Natural killer cell (primary cell): ENCODE measurements at regions of chr2 and their contacts with region 1.

Region 1: GRCh38 chr2:37600735-37601134 is 70.7 kb downstream of the CDC42EP3 start:
- DNase-seq: peak in 1 of 2 donors; percentile 34
- ATAC-seq: peak in 1 of 3 donors; percentile 11
- H3K4me3 ChIP-seq: peak overlapping the region; percentile 39
- H3K4me3 Mint-ChIP-seq: peak overlapping the region; percentile 97
- H3K27ac ChIP-seq: peak overlapping the region; percentile 93
- H3K27ac Mint-ChIP-seq: peak overlapping the region; percentile 98 to 99
- H3K4me1 ChIP-seq: peaks cover 16% of the 10 kb centered on the region
- H3K4me1 Mint-ChIP-seq: peaks cover 54 to 69% of the 10 kb centered on the region in 2 donors
- H3K27me3 ChIP-seq: no peaks in the 10 kb centered on the region
- H3K27me3 Mint-ChIP-seq: no peaks in the 10 kb centered on the region
- CTCF ChIP-seq: no peak

Region 2: GRCh38 chr2:37585982-37586621 is 14.6 kb before region 1 on chr2:
- intact Hi-C with region 1: loop called (anchors 1 kb)
- DNase-seq: peak; percentile 53 to 89
- ATAC-seq: peak; percentile 83 to 91 (median 90)
- H3K4me3 ChIP-seq: no peak overlapping the region
- H3K4me3 Mint-ChIP-seq: peak overlapping the region; percentile 82
- H3K27ac ChIP-seq: peak overlapping the region; percentile 73
- H3K27ac Mint-ChIP-seq: peak overlapping the region; percentile 82 to 86
- H3K4me1 ChIP-seq: peaks cover 40% of the 10 kb centered on the region
- H3K4me1 Mint-ChIP-seq: peaks cover 66 to 69% of the 10 kb centered on the region in 2 donors
- H3K27me3 ChIP-seq: no peaks in the 10 kb centered on the region
- H3K27me3 Mint-ChIP-seq: no peaks in the 10 kb centered on the region
- CTCF ChIP-seq: no peak

Region 3: GRCh38 chr2:37615804-37616676 is 15.3 kb after region 1 on chr2:
- intact Hi-C with region 1: loop called (anchors 2 kb)
- DNase-seq: peak; percentile 59 to 80
- ATAC-seq: peak; percentile 82 to 92 (median 85)
- H3K4me3 ChIP-seq: no peak overlapping the region
- H3K4me3 Mint-ChIP-seq: peak overlapping the region; percentile 59
- H3K27ac ChIP-seq: peak overlapping the region; percentile 68
- H3K27ac Mint-ChIP-seq: peak overlapping the region; percentile 88 to 92
- H3K4me1 ChIP-seq: peaks cover 40% of the 10 kb centered on the region
- H3K4me1 Mint-ChIP-seq: peaks cover 66 to 68% of the 10 kb centered on the region in 2 donors
- H3K27me3 ChIP-seq: no peaks in the 10 kb centered on the region
- H3K27me3 Mint-ChIP-seq: no peaks in the 10 kb centered on the region
- CTCF ChIP-seq: no peak

Region 4: GRCh38 chr2:37623971-37624900 is 23.5 kb after region 1 on chr2:
- intact Hi-C with region 1: loop called (anchors 2 kb)
- DNase-seq: peak in 1 of 2 donors; percentile 67
- ATAC-seq: peak; percentile 83 to 90 (median 83)
- H3K4me3 ChIP-seq: no peak overlapping the region
- H3K4me3 Mint-ChIP-seq: peak overlapping the region; percentile 68
- H3K27ac ChIP-seq: peak overlapping the region; percentile 75
- H3K27ac Mint-ChIP-seq: peak overlapping the region; percentile 90 to 92
- H3K4me1 ChIP-seq: peaks cover 41% of the 10 kb centered on the region
- H3K4me1 Mint-ChIP-seq: peaks cover 67 to 68% of the 10 kb centered on the region in 2 donors
- H3K27me3 ChIP-seq: no peaks in the 10 kb centered on the region
- H3K27me3 Mint-ChIP-seq: no peaks in the 10 kb centered on the region
- CTCF ChIP-seq: no peak

Region 5: GRCh38 chr2:37635504-37636380 is 35.0 kb after region 1 on chr2:
- intact Hi-C with region 1: loop called (anchors 1 kb)
- DNase-seq: peak; percentile 55 to 90
- ATAC-seq: peak; percentile 79 to 93 (median 89)
- H3K4me3 ChIP-seq: no peak overlapping the region
- H3K4me3 Mint-ChIP-seq: peak overlapping the region; percentile 74
- H3K27ac ChIP-seq: peak overlapping the region; percentile 91
- H3K27ac Mint-ChIP-seq: peak overlapping the region; percentile 91 to 96
- H3K4me1 ChIP-seq: peaks cover 38% of the 10 kb centered on the region
- H3K4me1 Mint-ChIP-seq: peaks cover 64 to 76% of the 10 kb centered on the region in 2 donors
- H3K27me3 ChIP-seq: no peaks in the 10 kb centered on the region
- H3K27me3 Mint-ChIP-seq: no peaks in the 10 kb centered on the region
- CTCF ChIP-seq: no peak

Region 6: GRCh38 chr2:37648331-37649011 is 47.7 kb after region 1 on chr2:
- intact Hi-C with region 1: loop called (anchors 1 kb)
- DNase-seq: peak; percentile 57 to 72
- ATAC-seq: peak; percentile 82 to 91 (median 87)
- H3K4me3 ChIP-seq: no peak overlapping the region
- H3K4me3 Mint-ChIP-seq: peak overlapping the region; percentile 93
- H3K27ac ChIP-seq: peak overlapping the region; percentile 77
- H3K27ac Mint-ChIP-seq: peak overlapping the region; percentile 91 to 96
- H3K4me1 ChIP-seq: peaks cover 72% of the 10 kb centered on the region
- H3K4me1 Mint-ChIP-seq: peaks cover 93 to 95% of the 10 kb centered on the region in 2 donors
- H3K27me3 ChIP-seq: no peaks in the 10 kb centered on the region
- H3K27me3 Mint-ChIP-seq: no peaks in the 10 kb centered on the region
- CTCF ChIP-seq: peak; percentile 47

Region 7: DNA sequence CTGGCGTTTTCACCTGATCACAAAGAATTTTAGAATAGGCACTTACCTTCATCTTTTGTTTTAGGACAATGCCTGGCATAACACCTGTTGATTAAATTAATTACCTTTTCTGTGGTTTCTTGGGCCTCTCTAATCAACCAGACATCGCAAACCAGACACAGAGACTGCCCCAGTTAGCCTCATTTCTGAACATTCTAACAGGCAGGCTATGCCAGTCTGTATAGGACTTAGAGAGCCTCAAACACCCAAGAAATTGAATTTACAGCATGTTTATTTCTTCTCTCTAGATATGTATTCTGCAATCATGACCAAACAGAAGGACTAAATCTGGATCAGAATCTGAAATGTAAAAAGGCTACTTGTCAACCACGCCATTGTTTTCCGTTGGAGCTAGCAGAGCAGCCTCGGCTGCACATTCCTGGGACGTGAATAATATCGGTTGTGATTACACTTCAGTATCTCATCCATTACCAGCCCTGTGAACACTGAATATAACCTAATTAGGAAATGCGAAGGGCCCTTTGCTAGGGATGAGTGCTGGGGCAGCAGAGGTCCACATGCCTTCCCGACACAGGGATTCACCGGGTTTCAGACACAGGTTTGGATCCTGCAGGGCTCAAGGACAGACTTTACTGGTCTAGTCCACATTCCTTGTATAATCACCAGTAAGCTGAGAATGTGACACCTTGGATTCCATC is 88.2 kb after region 1 on chr2:
- intact Hi-C with region 1: no loop called
- DNase-seq: no peak
- ATAC-seq: no peak
- H3K4me3 ChIP-seq: no peak overlapping the region
- H3K4me3 Mint-ChIP-seq: no peak overlapping the region
- H3K27ac ChIP-seq: no peak overlapping the region
- H3K27ac Mint-ChIP-seq: no peak overlapping the region
- H3K4me1 ChIP-seq: no peaks in the 10 kb centered on the region
- H3K4me1 Mint-ChIP-seq: peaks cover 12 to 13% of the 10 kb centered on the region in 2 donors
- H3K27me3 ChIP-seq: no peaks in the 10 kb centered on the region
- H3K27me3 Mint-ChIP-seq: no peaks in the 10 kb centered on the region
- CTCF ChIP-seq: no peak